Body of pancreas (tissue), 4 donors: ENCODE measurements at regions of chr10 and their contacts with region 1.

Region 1: DNA sequence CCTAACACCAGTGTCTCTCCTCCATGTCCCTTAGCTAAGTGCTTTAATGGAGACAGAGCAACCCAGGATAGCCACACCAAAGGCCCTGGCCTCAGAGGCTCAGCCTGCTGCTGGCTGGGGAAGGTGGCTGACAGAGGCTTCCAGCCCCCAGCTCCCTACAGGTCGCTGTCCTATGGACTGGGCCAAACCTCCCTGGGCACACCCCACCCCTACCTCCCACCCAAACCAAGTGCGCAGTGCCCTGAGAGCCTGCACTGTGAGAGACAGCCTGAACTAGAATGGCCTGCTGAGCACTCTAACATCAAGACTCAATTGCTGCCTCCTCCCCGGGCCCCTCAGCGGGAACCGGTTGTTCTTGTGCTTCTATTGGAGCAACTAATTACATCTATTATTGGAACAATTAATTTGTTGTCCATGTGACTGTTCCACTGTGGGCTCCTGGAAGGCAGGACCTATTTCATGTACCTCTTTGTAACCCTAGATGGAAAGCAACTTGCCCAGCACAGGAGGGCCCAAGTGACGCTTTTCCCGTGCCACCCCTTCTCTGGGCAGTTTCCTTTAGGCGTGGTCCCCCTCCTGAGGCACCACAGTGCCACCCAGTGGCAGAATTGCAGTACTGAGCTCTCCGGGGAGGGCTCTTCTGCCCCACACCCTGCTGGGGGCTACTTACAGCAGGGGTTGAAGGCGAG is 63.6 kb upstream of the WAPL start:
- DNase-seq: peak; percentile 65 to 74 (median 71)
- ATAC-seq: peak; percentile 95
- H3K4me3 ChIP-seq: no peak overlapping the region
- H3K27ac ChIP-seq: no peak overlapping the region
- H3K4me1 ChIP-seq: peaks cover 6% of the 10 kb centered on the region
- H3K27me3 ChIP-seq: no peaks in the 10 kb centered on the region
- CTCF ChIP-seq: peak; percentile 84 to 99 (median 95)
- POLR2A ChIP-seq: no peak

Region 2: GRCh38 chr10:86389441-86390193 is 195.6 kb before region 1 on chr10:
- intact Hi-C with region 1: loop called (anchors 5 kb)
- DNase-seq: peak; percentile 69 to 87 (median 75)
- ATAC-seq: peak; percentile 92
- H3K4me3 ChIP-seq: no peak overlapping the region
- H3K27ac ChIP-seq: no peak overlapping the region
- H3K4me1 ChIP-seq: peaks cover 11% of the 10 kb centered on the region
- H3K27me3 ChIP-seq: no peaks in the 10 kb centered on the region
- CTCF ChIP-seq: no peak
- POLR2A ChIP-seq: peak in 1 of 3 donors; percentile 26

Region 3: GRCh38 chr10:86521678-86522509 is 63.3 kb before region 1 on chr10 and contains the start of gene WAPL:
- intact Hi-C with region 1: loop called (anchors 10 kb)
- DNase-seq: peak; percentile 94 to 96 (median 96)
- ATAC-seq: peak; percentile 99
- H3K4me3 ChIP-seq: peak within 1 kb of the TSS; percentile 72 to 83
- H3K27ac ChIP-seq: peak within 1 kb of the TSS; percentile 91 to 96 (median 95)
- H3K4me1 ChIP-seq: peaks cover 51% of the 10 kb centered on the region
- H3K27me3 ChIP-seq: no peaks in the 10 kb centered on the region
- CTCF ChIP-seq: no peak
- POLR2A ChIP-seq: peak; percentile 80 to 88 (median 86)
- total RNA-seq, gene WAPL: 24.1 to 38.9 TPM

Region 4: GRCh38 chr10:86698207-86698940 is 113.2 kb after region 1 on chr10:
- intact Hi-C with region 1: no loop called
- DNase-seq: peak in 3 of 4 donors; percentile 13 to 50 (median 35)
- ATAC-seq: no peak
- H3K4me3 ChIP-seq: no peak overlapping the region
- H3K27ac ChIP-seq: no peak overlapping the region
- H3K4me1 ChIP-seq: peaks cover 6% of the 10 kb centered on the region
- H3K27me3 ChIP-seq: no peaks in the 10 kb centered on the region
- CTCF ChIP-seq: peak in 3 of 7 experiments; percentile 17 to 32 (median 20)
- POLR2A ChIP-seq: no peak